Aorta (tissue), 5 donors: ENCODE measurements at regions of chr6 and their contacts with region 1.

Region 1: DNA sequence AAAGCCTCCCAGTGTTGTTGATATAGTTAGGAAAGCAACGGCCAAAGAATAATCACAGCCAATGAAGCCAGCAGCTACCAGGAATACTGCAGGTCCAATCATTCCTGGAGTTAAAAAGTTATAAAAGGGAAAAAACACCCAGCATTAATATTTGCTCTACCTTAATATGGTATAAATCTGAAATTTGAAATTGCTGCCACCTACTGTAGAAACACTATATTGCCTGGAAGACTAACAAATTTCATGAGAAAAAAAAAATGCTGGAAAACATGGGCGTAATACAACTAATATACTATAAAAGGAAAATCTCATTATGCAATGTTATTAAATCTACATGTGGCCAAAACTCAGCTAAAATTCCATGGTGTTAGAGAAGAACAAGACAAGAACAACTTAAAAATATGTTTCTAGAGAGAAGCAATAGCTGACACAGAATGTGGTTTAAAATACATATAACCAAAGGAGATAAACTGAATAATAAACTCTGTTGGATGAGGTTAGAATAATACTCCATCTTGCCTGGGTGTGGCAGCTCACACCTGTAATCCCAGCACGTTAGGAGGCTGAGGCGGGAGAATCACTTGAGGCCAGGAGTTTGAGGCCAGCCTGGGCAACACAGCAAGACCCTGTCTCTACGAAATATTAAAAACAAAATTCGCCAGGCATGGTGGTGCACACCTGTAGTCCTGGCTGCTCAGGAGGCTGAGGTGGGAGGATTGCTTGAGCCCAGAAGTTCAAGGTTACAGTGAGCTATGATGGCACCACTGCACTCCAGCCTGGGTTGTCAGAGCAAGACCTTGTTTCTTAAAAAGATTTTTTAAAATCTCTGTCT is 43.1 kb downstream of the SLC17A5 start:
- DNase-seq: no peak
- ATAC-seq: peak; percentile 65
- H3K4me3 ChIP-seq: no peak overlapping the region
- H3K27ac ChIP-seq: peak overlapping the region in 1 of 2 donors; percentile 2
- H3K4me1 ChIP-seq: no peaks in the 10 kb centered on the region
- H3K27me3 ChIP-seq: no peaks in the 10 kb centered on the region

Region 2: GRCh38 chr6:73515204-73515655 is 95.4 kb before region 1 on chr6:
- intact Hi-C with region 1: loop called (anchors 2 kb)
- DNase-seq: no peak
- ATAC-seq: no peak
- H3K4me3 ChIP-seq: no peak overlapping the region
- H3K27ac ChIP-seq: no peak overlapping the region
- H3K4me1 ChIP-seq: no peaks in the 10 kb centered on the region
- H3K27me3 ChIP-seq: no peaks in the 10 kb centered on the region